Naive thymus-derived CD4-positive, alpha-beta T cell (primary cell): ENCODE measurements at regions of chr11 and their contacts with region 1.

Region 1: GRCh38 chr11:134033696-134034491 is 35.0 kb upstream of the JAM3 start:
- DNase-seq: peak in 8 of 9 donors; percentile 38 to 74 (median 60)
- ATAC-seq: peak; percentile 77
- H3K4me3 ChIP-seq: peak overlapping the region; percentile 25
- H3K4me3 Mint-ChIP-seq: peak overlapping the region; percentile 63 to 95 (median 75)
- H3K27ac ChIP-seq: peak overlapping the region; percentile 67
- H3K27ac Mint-ChIP-seq: peak overlapping the region; percentile 74 to 98 (median 85)
- H3K4me1 ChIP-seq: peaks cover 29 to 46% of the 10 kb centered on the region in 2 donors
- H3K4me1 Mint-ChIP-seq: peaks cover 33 to 79% (median 65%) of the 10 kb centered on the region in 7 donors
- H3K27me3 ChIP-seq: no peaks in the 10 kb centered on the region
- H3K27me3 Mint-ChIP-seq: peaks cover 0 to 24% (median 0%) of the 10 kb centered on the region in 5 donors

Region 2: GRCh38 chr11:133956650-133957633 is 77.0 kb before region 1 on chr11 and contains the start of gene IGSF9B:
- CTCF ChIA-PET with region 1: interaction called, 3 read pairs
- POLR2A ChIA-PET with region 1: interaction called, 9 read pairs
- intact Hi-C with region 1: loop called in 1 of 2 experiments (anchors 1 kb)
- DNase-seq: peak; percentile 87 to 97 (median 92)
- ATAC-seq: peak; percentile 97
- H3K4me3 ChIP-seq: peak within 1 kb of the TSS; percentile 99
- H3K4me3 Mint-ChIP-seq: peak within 1 kb of the TSS; percentile 89 to 96 (median 92)
- H3K27ac ChIP-seq: peak within 1 kb of the TSS; percentile 75
- H3K27ac Mint-ChIP-seq: peak within 1 kb of the TSS; percentile 48 to 91 (median 88)
- H3K4me1 ChIP-seq: peaks cover 11 to 27% of the 10 kb centered on the region in 2 donors
- H3K4me1 Mint-ChIP-seq: peaks cover 29 to 52% (median 43%) of the 10 kb centered on the region in 7 donors
- H3K27me3 ChIP-seq: no peaks in the 10 kb centered on the region
- H3K27me3 Mint-ChIP-seq: peaks cover 7 to 24% (median 16%) of the 10 kb centered on the region in 5 donors
- total RNA-seq, gene IGSF9B: 17.6 to 155 (median 24.1) TPM

Region 3: GRCh38 chr11:134253188-134253993 is 219.5 kb after region 1 on chr11 and contains the starts of genes ACAD8 and THYN1:
- CTCF ChIA-PET with region 1: no interaction called
- POLR2A ChIA-PET with region 1: no interaction called
- intact Hi-C with region 1: loop called in 1 of 2 experiments (anchors 1 kb)
- DNase-seq: peak; percentile 82 to 98 (median 95)
- ATAC-seq: peak; percentile 100
- H3K4me3 ChIP-seq: peak within 1 kb of the TSS; percentile 89
- H3K4me3 Mint-ChIP-seq: peak within 1 kb of the TSS; percentile 79 to 99 (median 94)
- H3K27ac ChIP-seq: peak within 1 kb of the TSS; percentile 73
- H3K27ac Mint-ChIP-seq: peak within 1 kb of the TSS; percentile 75 to 92 (median 88)
- H3K4me1 ChIP-seq: peaks cover 16 to 18% of the 10 kb centered on the region in 2 donors
- H3K4me1 Mint-ChIP-seq: peaks cover 24 to 47% (median 40%) of the 10 kb centered on the region in 7 donors
- H3K27me3 ChIP-seq: no peaks in the 10 kb centered on the region
- H3K27me3 Mint-ChIP-seq: no peaks in the 10 kb centered on the region
- total RNA-seq, gene ACAD8: 18.5 to 40.2 (median 26.1) TPM
- total RNA-seq, gene THYN1: 34.4 to 67.7 (median 62.5) TPM